ENCODE measurements at regions of chr17 and their contacts with region 1.

Region 1: GRCh38 chr17:61583242-61583641 is 7.8 kb downstream of the NACA2 start:
- DNase-seq: peak; percentile 65
- ATAC-seq: peak; percentile 97
- H3K4me3 ChIP-seq: no peak overlapping the region
- H3K27ac ChIP-seq: peak overlapping the region; percentile 38; the same call in 1 of the 2 replicates
- H3K4me1 ChIP-seq: peaks cover 9 to 24% of the 10 kb centered on the region in 2 experiments
- H3K27me3 ChIP-seq: no peaks in the 10 kb centered on the region
- CTCF ChIP-seq: peak; percentile 44 to 74 (median 74); a peak in 5 of 6 replicates
- POLR2A ChIP-seq: no peak
- RAD21 ChIP-seq: peak; percentile 72

Region 2: DNA sequence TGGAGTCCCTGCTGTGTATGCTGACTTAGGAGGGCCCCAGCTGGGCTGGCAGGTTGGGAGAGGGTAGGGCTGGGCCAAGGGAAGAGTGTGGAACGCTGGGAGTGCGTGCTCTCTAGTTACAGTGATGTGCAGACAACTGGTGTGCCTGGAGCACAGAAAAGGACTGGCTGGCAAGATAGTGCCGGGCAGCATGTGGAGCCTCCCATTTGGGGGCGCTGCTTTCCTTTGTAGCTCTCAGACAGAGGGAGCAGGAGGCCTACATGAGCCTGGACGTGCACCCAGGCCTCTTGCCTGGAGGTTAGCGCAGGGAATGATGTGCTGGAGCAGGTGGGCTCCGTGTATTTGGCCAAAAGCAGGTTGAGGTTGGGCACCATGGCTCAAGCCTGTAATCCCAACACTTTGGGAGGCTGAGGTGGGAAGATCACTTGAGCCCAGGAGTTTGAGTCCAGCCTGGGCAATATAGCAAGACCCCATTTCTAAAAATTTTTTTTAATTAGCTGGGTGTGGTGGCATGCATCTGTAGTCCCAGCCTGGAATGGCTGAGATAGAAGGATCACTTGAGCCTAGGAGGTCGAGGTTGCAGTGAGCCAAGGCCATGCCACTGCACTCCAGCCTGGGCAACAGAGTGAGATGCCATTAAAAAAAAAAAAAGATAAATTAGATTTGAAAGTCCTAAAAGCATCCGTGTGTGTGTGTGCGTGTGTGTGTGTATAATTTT is 157.1 kb before region 1 on chr17:
- CTCF ChIA-PET with region 1: interaction called, 10 read pairs
- POLR2A ChIA-PET with region 1: no interaction called
- RAD21 ChIA-PET with region 1: no interaction called
- intact Hi-C with region 1: no loop called
- DNase-seq: peak; percentile 63
- ATAC-seq: peak; percentile 72
- H3K4me3 ChIP-seq: no peak overlapping the region
- H3K27ac ChIP-seq: peak overlapping the region; percentile 89
- H3K4me1 ChIP-seq: peaks cover 37 to 42% of the 10 kb centered on the region in 2 experiments
- H3K27me3 ChIP-seq: no peaks in the 10 kb centered on the region
- CTCF ChIP-seq: peak; percentile 58 to 86 (median 64)
- POLR2A ChIP-seq: no peak
- RAD21 ChIP-seq: peak; percentile 92

Region 3: DNA sequence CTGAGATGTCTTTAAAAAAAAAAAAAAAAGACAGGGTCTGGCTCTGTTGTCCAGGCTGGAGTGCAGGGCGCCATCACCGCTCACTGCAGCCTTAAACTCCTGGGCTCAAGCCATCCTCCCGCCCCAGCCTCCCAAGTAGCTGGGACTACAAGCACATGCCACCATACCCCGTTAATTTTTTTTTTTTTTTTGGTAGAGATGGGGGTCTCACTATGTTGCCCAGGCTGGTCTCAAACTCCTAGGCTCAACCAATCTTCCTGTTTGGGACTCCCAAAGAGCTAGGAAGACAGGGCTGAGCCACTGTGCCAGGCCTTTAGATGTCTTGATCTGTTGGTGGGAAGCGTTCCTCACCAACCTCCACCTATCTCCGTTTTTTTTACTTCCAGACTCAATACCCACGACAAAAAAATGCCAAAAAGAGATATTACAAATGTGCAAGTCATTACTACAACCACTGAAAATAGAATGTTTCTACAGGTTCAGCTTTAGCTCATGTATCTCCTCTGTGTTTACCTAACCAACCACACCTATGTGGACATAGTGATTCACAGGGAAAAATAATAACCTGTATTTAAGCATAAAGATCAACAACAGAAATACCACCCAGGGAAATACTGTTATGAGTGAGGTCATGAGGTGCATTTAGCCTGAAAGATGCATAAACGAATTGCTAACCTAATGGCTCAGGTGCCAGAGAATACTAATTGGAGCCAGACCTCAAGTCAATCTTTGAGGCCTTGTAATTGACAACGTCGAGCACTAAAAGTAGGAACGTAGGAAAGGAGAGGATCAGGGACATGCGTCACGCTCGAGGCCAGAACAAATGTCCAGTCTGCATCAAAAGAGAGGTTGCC is 14.8 kb before region 1 on chr17:
- CTCF ChIA-PET with region 1: interaction called, 12 read pairs
- POLR2A ChIA-PET with region 1: no interaction called
- RAD21 ChIA-PET with region 1: no interaction called
- intact Hi-C with region 1: no loop called
- DNase-seq: peak; percentile 95
- ATAC-seq: peak; percentile 75
- H3K4me3 ChIP-seq: peak overlapping the region in 1 of 2 experiments; percentile 0; a peak in 2 of 4 replicates
- H3K27ac ChIP-seq: peak overlapping the region; percentile 96
- H3K4me1 ChIP-seq: peaks cover 36 to 48% of the 10 kb centered on the region in 2 experiments
- H3K27me3 ChIP-seq: no peaks in the 10 kb centered on the region
- CTCF ChIP-seq: no peak
- POLR2A ChIP-seq: no peak
- RAD21 ChIP-seq: peak; percentile 51

Region 4: DNA sequence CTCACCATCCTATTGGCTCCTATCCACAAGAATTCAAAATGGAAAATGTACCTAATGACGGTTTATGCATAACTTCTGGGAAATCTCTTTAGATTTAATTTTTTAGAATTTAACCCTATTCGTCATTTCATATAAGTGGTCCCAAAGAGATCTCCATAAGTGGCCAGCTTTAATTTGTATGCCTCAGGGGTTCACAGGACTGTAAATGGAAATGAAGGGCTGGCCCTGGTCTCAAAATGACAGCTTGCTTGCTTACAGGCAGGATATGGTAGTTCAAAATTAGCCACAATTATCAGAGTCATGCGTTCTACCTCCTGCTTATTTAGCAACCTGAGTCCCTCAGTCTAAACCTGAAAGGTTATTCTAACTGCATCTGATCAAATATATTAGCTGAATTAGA is 14.4 kb after region 1 on chr17:
- CTCF ChIA-PET with region 1: interaction called, 18 read pairs
- POLR2A ChIA-PET with region 1: interaction called, 3 read pairs
- RAD21 ChIA-PET with region 1: no interaction called
- intact Hi-C with region 1: no loop called
- DNase-seq: no peak
- ATAC-seq: no peak
- H3K4me3 ChIP-seq: no peak overlapping the region
- H3K27ac ChIP-seq: no peak overlapping the region
- H3K4me1 ChIP-seq: no peaks in the 10 kb centered on the region
- H3K27me3 ChIP-seq: no peaks in the 10 kb centered on the region
- CTCF ChIP-seq: no peak
- POLR2A ChIP-seq: no peak
- RAD21 ChIP-seq: no peak

Region 5: DNA sequence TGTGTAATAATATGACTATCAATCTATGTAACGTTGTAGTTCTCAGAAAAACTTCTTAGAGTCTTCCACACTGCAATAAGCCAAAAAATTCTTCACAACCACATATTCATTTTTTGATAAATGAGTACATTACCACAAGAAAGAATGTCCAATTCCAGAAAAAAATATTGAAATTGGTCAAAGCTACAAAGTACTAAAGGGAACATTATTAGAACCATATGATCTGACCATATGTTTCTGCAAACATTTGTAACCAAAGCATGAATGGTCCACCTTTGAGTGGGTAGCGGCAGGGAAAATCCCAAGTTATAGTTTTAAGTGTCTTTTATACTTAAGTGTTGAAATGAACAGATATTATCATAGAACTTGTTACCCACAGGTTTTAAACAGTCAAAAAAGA is 79.5 kb after region 1 on chr17:
- CTCF ChIA-PET with region 1: no interaction called
- POLR2A ChIA-PET with region 1: no interaction called
- RAD21 ChIA-PET with region 1: no interaction called
- intact Hi-C with region 1: no loop called
- DNase-seq: no peak
- ATAC-seq: no peak
- H3K4me3 ChIP-seq: no peak overlapping the region
- H3K27ac ChIP-seq: no peak overlapping the region
- H3K4me1 ChIP-seq: no peaks in the 10 kb centered on the region
- H3K27me3 ChIP-seq: no peaks in the 10 kb centered on the region
- CTCF ChIP-seq: no peak
- POLR2A ChIP-seq: no peak
- RAD21 ChIP-seq: no peak